ENCODE measurements at regions of chr3 and their contacts with region 1.

Region 1: GRCh38 chr3:14921078-14921616 is 26.2 kb upstream of the NR2C2 start:
- DNase-seq: peak; percentile 42 to 94
- H3K4me3 ChIP-seq: no peak overlapping the region
- H3K27ac ChIP-seq: peak overlapping the region in 1 of 2 donors; percentile 9
- H3K4me1 ChIP-seq: peaks cover 0 to 6% of the 10 kb centered on the region in 2 donors
- H3K27me3 ChIP-seq: no peaks in the 10 kb centered on the region
- CTCF ChIP-seq: peak; percentile 98 to 99 (median 99)

Region 2: DNA sequence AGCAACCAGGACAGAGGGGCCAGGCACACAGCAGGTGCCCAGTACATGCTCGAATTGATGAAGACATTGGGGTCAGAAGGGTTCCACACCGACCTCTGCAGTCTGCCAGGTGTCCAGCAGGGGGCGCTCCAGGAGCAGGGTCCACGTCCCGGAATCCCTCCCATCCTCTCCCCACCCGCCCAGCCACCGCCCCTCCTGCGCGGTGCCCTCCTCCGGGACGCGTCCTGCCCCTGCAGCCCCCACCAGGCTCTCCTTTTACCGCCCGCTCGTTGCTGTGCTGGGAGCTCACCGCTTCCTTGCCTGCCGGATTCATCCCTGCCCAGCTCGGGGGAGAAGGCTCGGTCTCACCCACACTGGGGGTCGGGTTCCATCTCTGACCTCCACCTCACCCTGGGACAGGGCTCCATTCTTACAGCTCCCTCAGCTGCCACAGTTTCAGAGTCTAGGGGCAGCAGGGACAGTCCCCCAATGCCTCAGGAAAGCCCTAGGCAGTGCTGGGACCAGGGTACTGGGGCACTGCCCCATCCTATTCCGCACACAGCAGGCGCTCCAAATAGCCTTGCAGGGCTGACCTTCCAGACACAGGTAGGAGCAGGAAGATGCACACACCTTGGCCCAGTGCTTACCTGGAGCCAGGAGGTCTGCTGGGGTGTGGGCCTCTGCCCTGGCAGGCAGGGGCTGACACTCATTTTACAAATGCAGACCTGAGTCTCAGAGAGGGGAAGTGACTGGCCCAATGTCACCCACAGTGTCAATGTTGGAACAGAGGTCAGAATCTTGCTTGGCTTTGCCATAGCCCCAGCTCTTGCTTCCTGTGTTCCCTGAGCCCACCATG is 412.0 kb before region 1 on chr3:
- intact Hi-C with region 1: loop called (anchors 5 kb)
- DNase-seq: peak in 1 of 2 donors; percentile 76
- H3K4me3 ChIP-seq: peak overlapping the region in 1 of 2 donors; percentile 24
- H3K27ac ChIP-seq: no peak overlapping the region
- H3K4me1 ChIP-seq: no peaks in the 10 kb centered on the region
- H3K27me3 ChIP-seq: no peaks in the 10 kb centered on the region
- CTCF ChIP-seq: peak; percentile 64 to 92 (median 91)

Region 3: GRCh38 chr3:14678015-14678503 is 243.1 kb before region 1 on chr3:
- intact Hi-C with region 1: loop called (anchors 1 kb)
- DNase-seq: no peak
- H3K4me3 ChIP-seq: no peak overlapping the region
- H3K27ac ChIP-seq: no peak overlapping the region
- H3K4me1 ChIP-seq: no peaks in the 10 kb centered on the region
- H3K27me3 ChIP-seq: no peaks in the 10 kb centered on the region
- CTCF ChIP-seq: no peak

Region 4: GRCh38 chr3:14774431-14774830 is 146.7 kb before region 1 on chr3:
- intact Hi-C with region 1: no loop called
- DNase-seq: peak in 1 of 2 donors; percentile 44
- H3K4me3 ChIP-seq: no peak overlapping the region
- H3K27ac ChIP-seq: no peak overlapping the region
- H3K4me1 ChIP-seq: no peaks in the 10 kb centered on the region
- H3K27me3 ChIP-seq: no peaks in the 10 kb centered on the region
- CTCF ChIP-seq: no peak

Region 5: GRCh38 chr3:14791343-14791945 is 129.7 kb before region 1 on chr3:
- intact Hi-C with region 1: loop called (anchors 1 kb)
- DNase-seq: no peak
- H3K4me3 ChIP-seq: no peak overlapping the region
- H3K27ac ChIP-seq: no peak overlapping the region
- H3K4me1 ChIP-seq: peaks cover 0 to 2% of the 10 kb centered on the region in 2 donors
- H3K27me3 ChIP-seq: no peaks in the 10 kb centered on the region
- CTCF ChIP-seq: peak; percentile 42 to 55 (median 46)

Region 6: GRCh38 chr3:15268033-15268631 is 347.0 kb after region 1 on chr3:
- intact Hi-C with region 1: no loop called
- DNase-seq: peak in 1 of 2 donors; percentile 93
- H3K4me3 ChIP-seq: no peak overlapping the region
- H3K27ac ChIP-seq: peak overlapping the region; percentile 81 to 84
- H3K4me1 ChIP-seq: peaks cover 0 to 18% of the 10 kb centered on the region in 2 donors
- H3K27me3 ChIP-seq: no peaks in the 10 kb centered on the region
- CTCF ChIP-seq: peak; percentile 92 to 96 (median 95)

Measured in ascending aorta (tissue), 2 donors.